ENCODE measurements at regions of chr10 and their contacts with region 1.

Region 1: GRCh38 chr10:15168781-15169554 is 475 bp upstream of the NMT2 start:
- DNase-seq: peak; percentile 100
- ATAC-seq: peak; percentile 80
- H3K4me3 Mint-ChIP-seq: peak overlapping the region; percentile 70
- H3K27ac Mint-ChIP-seq: peak overlapping the region; percentile 85
- H3K4me1 Mint-ChIP-seq: peaks cover 55% of the 10 kb centered on the region
- H3K27me3 Mint-ChIP-seq: no peaks in the 10 kb centered on the region

Region 2: DNA sequence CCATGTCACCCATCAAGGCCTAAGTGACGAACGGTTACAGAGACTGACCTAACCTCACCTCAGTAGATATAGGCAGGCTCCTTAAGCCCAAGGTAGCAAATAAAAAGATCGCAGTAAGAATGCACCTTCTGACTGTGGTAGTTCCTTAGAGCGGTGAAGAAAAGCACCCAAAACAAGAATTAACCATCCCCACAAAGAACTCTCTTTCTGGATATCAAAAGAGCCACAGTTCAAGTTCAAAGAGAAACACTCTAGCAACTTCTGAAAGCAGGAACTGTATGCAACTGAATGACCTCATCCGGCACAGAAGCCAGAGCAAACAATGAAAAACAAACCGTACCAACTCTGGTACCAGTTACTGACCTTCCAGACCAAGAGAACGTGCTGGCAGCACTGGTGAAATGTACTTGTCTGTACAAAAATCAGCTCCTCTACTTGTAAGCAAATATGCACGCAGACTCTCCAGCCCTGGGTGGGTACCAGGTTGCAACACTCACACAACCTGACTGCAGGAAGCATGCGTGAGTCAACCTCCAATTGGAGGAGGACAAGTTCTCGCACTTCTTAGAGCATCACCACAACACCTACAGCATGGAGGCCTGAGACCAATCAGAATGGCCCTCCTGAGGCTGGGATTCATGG is 597.0 kb before region 1 on chr10:
- CTCF ChIA-PET with region 1: no interaction called
- POLR2A ChIA-PET with region 1: no interaction called
- intact Hi-C with region 1: no loop called
- DNase-seq: peak; percentile 78
- ATAC-seq: peak; percentile 88
- H3K4me3 Mint-ChIP-seq: peak overlapping the region; percentile 66
- H3K27ac Mint-ChIP-seq: peak overlapping the region; percentile 93
- H3K4me1 Mint-ChIP-seq: peaks cover 93% of the 10 kb centered on the region
- H3K27me3 Mint-ChIP-seq: no peaks in the 10 kb centered on the region

Region 3: DNA sequence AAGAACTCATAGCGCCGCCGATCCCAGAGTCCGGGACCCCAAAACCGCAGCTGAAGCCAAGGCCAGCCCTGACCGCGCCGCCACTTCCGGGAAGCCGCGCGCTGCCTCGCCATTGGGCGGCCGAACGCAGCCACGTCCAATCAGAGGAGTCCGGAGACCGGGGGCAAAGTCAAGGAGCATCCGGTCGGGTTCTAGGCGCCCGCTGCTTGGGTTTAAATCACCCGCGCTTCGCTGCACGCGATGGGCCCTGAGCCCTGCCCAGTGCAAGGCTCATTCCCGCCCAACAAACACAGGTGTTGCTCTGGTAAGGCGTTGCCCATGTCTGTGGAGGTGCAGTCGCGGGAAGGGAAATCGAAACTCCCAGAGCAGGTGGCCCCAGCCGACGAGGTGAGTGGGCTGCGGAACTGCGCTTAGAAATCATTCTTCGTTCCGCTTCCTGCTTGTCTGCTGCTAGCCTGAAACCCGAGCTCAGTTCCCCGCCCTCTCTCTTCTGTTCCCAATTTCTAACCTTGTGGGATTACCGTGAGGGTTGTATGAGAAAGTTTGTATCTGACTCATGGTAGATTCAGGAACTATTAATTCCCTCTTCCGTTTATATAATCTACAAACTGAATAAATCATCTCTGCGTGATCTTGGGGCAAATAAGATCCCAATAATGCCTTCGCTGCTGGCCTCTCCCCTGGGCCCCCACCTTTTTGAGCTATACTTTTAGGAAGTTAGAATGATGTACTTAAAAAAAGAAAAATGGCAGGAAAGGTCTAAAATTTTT is 214.8 kb before region 1 on chr10 and contains the start of gene DCLRE1C:
- CTCF ChIA-PET with region 1: no interaction called
- POLR2A ChIA-PET with region 1: no interaction called
- intact Hi-C with region 1: loop called (anchors 1 kb)
- DNase-seq: peak; percentile 94
- ATAC-seq: peak; percentile 94
- H3K4me3 Mint-ChIP-seq: peak within 1 kb of the TSS; percentile 90
- H3K27ac Mint-ChIP-seq: peak within 1 kb of the TSS; percentile 97
- H3K4me1 Mint-ChIP-seq: peaks cover 52% of the 10 kb centered on the region
- H3K27me3 Mint-ChIP-seq: no peaks in the 10 kb centered on the region
- total RNA-seq, gene DCLRE1C: 17.9 to 30.9 TPM

Region 4: GRCh38 chr10:15097011-15097812 is 71.8 kb before region 1 on chr10 and contains the start of gene RPP38:
- CTCF ChIA-PET with region 1: interaction called, 5 read pairs
- POLR2A ChIA-PET with region 1: interaction called, 3 read pairs
- intact Hi-C with region 1: loop called (anchors 1 kb)
- DNase-seq: peak; percentile 97
- ATAC-seq: peak; percentile 95
- H3K4me3 Mint-ChIP-seq: peak within 1 kb of the TSS; percentile 87
- H3K27ac Mint-ChIP-seq: peak within 1 kb of the TSS; percentile 97
- H3K4me1 Mint-ChIP-seq: peaks cover 22% of the 10 kb centered on the region
- H3K27me3 Mint-ChIP-seq: no peaks in the 10 kb centered on the region
- total RNA-seq, gene RPP38: 26.1 to 27.1 TPM

Region 5: DNA sequence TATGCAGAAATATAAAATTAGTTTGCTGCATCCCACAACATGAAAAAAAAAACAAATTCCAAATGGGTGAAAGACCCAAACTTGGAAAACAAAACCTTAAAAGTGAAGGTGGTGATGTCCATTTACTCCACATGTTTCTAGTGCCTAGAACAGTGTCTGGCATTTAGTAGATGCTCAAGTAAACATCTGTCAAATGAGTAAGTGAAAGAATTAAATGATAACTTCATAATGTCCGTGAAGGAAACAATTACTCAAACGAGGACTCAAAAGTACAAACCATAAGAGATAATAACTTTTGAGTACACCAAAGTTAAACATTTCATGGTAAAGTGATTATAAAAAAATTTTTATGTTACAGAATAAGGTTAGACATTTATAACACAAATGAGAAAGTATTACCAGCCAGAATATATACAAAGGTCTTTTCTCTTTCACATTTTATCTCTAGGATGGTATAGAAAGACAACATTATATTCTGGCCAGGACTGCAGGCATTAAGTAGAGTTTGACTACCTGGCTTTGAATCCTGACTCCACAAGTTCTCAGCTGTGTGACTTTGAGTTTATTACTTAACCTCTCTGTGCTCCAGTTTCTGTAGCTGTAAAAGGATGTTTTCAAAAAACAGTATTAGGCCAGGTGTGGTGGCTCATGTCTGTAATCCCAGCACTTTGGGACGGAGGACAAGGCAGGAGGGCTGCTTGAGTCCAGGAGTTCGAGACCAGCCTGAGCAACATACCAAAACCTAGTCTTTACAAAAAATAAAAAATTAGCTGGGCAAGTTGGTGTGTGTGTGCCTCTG is 21.2 kb before region 1 on chr10:
- CTCF ChIA-PET with region 1: interaction called, 9 read pairs
- POLR2A ChIA-PET with region 1: interaction called, 3 read pairs
- intact Hi-C with region 1: loop called (anchors 2 kb)
- DNase-seq: no peak
- ATAC-seq: peak; percentile 33
- H3K4me3 Mint-ChIP-seq: no peak overlapping the region
- H3K27ac Mint-ChIP-seq: no peak overlapping the region
- H3K4me1 Mint-ChIP-seq: peaks cover 46% of the 10 kb centered on the region
- H3K27me3 Mint-ChIP-seq: no peaks in the 10 kb centered on the region

Region 6: DNA sequence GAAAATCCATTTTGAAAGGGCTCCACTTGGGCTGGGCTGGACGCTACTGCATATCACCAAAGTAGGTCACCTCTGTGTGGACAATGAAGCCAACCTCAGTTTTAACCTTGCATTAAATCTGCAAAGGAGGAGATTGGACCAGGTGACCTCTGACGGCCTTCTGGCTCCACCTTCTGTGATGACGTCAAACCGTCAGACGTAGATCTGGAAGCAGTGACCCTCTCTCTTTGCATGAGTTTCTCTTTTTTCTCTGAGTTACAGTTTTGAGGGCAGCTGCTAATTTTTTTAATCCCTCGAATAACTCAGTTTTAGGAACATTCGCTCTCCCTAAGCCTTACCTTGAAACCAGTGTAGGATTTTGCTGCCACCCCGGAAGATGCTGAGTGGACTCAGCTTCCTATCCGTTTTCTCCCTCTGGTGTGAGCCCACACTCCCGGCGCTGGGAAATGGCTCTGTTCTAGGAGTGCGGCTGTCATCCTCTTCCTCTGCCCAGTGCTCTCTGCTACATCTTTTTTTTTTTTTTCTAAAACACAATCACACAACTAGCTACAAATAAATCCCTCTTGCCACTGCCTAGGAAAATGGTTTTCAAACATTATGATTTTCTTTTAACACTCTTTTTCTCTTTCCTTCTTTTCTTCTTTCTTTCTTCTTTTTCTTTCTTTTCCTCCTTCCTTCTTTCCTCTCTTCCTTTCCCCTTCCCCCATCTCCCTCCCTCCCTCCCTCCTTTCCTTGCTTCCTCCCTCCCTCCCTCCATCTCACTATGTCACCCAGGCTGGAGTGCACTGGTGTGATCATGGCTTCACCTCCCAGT is 27.3 kb after region 1 on chr10:
- CTCF ChIA-PET with region 1: no interaction called
- POLR2A ChIA-PET with region 1: no interaction called
- intact Hi-C with region 1: no loop called
- DNase-seq: peak; percentile 25
- ATAC-seq: no peak
- H3K4me3 Mint-ChIP-seq: peak overlapping the region; percentile 40
- H3K27ac Mint-ChIP-seq: peak overlapping the region; percentile 25
- H3K4me1 Mint-ChIP-seq: peaks cover 7% of the 10 kb centered on the region
- H3K27me3 Mint-ChIP-seq: no peaks in the 10 kb centered on the region

Region 7: GRCh38 chr10:16436758-16437539 is 1268.0 kb after region 1 on chr10 and contains the start of gene PTER:
- CTCF ChIA-PET with region 1: no interaction called
- POLR2A ChIA-PET with region 1: no interaction called
- intact Hi-C with region 1: loop called in 1 of 2 experiments (anchors 2 kb)
- DNase-seq: peak; percentile 99
- ATAC-seq: peak; percentile 99
- H3K4me3 Mint-ChIP-seq: peak within 1 kb of the TSS; percentile 89
- H3K27ac Mint-ChIP-seq: peak within 1 kb of the TSS; percentile 92
- H3K4me1 Mint-ChIP-seq: peaks cover 39% of the 10 kb centered on the region
- H3K27me3 Mint-ChIP-seq: no peaks in the 10 kb centered on the region
- total RNA-seq, gene PTER: 33.1 to 34.5 TPM

Measured in activated CD4-positive, alpha-beta T cell treated with anti-CD3 and anti-CD28 coated beads for 36 hours (primary cell).